PC-9 (cell line): ENCODE measurements at regions of chr10 and their contacts with region 1.

Region 1: GRCh38 chr10:24518981-24519597 is 204.6 kb downstream of the ARHGAP21 start:
- DNase-seq: peak in 1 of 2 experiments; percentile 41
- H3K4me3 ChIP-seq: no peak overlapping the region
- H3K27ac ChIP-seq: no peak overlapping the region
- H3K4me1 ChIP-seq: no peaks in the 10 kb centered on the region
- H3K27me3 ChIP-seq: no peaks in the 10 kb centered on the region
- CTCF ChIP-seq: peak; percentile 82

Region 2: GRCh38 chr10:23525406-23525805 is 993.7 kb before region 1 on chr10:
- CTCF ChIA-PET with region 1: no interaction called
- POLR2A ChIA-PET with region 1: no interaction called
- intact Hi-C with region 1: loop called (anchors 5 kb)
- DNase-seq: peak in 1 of 2 experiments; percentile 19
- H3K4me3 ChIP-seq: no peak overlapping the region
- H3K27ac ChIP-seq: no peak overlapping the region
- H3K4me1 ChIP-seq: peaks cover 10% of the 10 kb centered on the region; the same call in 1 of the 2 replicates
- H3K27me3 ChIP-seq: no peaks in the 10 kb centered on the region
- CTCF ChIP-seq: peak; percentile 60

Region 3: DNA sequence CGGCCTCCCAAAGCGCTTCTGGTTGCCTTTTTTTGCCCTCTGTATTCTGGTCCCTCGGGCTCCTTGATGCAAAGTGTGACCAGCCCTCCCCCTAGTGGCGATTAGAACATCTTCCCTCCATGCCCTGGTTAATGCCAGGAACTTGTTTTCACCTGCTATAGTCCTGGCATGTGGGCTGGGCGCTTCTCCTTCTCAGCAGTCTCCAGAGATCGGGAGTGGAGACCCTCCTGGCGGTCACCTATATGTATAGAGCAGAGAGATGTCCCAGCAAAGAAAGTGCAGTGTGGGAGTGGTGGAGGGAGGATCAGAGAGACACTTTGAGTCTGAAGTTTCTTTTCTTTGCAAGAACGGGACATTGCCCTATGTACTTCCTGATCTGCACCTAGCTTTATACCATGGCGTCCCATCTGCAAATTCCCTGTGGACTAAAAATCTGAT is 816.1 kb before region 1 on chr10:
- CTCF ChIA-PET with region 1: no interaction called
- POLR2A ChIA-PET with region 1: no interaction called
- intact Hi-C with region 1: loop called (anchors 2 kb)
- DNase-seq: peak; percentile 38 to 50
- H3K4me3 ChIP-seq: no peak overlapping the region
- H3K27ac ChIP-seq: no peak overlapping the region
- H3K4me1 ChIP-seq: no peaks in the 10 kb centered on the region
- H3K27me3 ChIP-seq: no peaks in the 10 kb centered on the region; the same call in 1 of the 2 replicates
- CTCF ChIP-seq: peak; percentile 79

Region 4: DNA sequence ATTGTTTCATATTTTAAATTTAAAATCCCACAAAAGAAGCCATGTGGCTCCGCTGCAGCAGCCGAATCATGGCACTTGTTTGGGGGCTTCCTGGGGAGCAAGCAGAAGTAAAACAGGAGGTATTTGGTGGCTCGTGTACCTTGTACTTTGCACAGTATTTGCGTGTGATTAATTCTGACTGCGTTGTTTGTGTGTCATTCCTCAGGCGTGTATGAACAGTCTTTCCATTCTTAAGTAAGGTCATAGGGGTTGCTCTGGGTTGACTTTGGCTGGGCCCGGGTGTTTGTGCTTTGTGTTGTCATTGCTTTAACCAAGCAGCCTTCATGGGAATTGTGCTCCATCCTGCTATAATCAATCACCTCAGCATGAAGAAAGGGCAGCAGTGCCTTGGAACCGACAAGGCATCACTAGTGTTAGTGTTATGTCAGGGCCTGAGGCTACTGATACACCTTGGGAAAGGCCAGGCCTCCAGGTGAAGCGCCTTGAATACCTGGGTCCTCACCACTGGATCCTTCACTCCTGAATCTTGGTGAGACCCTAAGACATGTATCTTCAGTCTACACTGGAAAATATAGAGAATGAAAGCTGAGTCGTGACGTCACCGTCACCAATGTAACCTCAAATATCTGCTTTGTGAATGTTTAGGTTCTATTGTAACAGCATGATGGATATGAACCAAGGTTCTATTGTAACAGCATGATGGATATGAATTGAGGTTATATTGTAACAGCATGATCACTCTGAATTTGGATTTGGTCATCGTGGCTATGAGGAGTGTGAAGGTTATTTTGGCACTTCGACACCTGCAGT is 22.4 kb after region 1 on chr10:
- CTCF ChIA-PET with region 1: interaction called, 11 read pairs
- POLR2A ChIA-PET with region 1: no interaction called
- intact Hi-C with region 1: no loop called
- DNase-seq: no peak
- H3K4me3 ChIP-seq: no peak overlapping the region
- H3K27ac ChIP-seq: no peak overlapping the region
- H3K4me1 ChIP-seq: no peaks in the 10 kb centered on the region
- H3K27me3 ChIP-seq: no peaks in the 10 kb centered on the region
- CTCF ChIP-seq: no peak

Region 5: GRCh38 chr10:24556750-24557742 is 38.0 kb after region 1 on chr10:
- CTCF ChIA-PET with region 1: no interaction called
- POLR2A ChIA-PET with region 1: no interaction called
- intact Hi-C with region 1: no loop called
- DNase-seq: peak in 1 of 2 experiments; percentile 47
- H3K4me3 ChIP-seq: no peak overlapping the region
- H3K27ac ChIP-seq: no peak overlapping the region
- H3K4me1 ChIP-seq: no peaks in the 10 kb centered on the region
- H3K27me3 ChIP-seq: no peaks in the 10 kb centered on the region
- CTCF ChIP-seq: peak; percentile 75

Region 6: GRCh38 chr10:24569828-24570657 is 51.0 kb after region 1 on chr10:
- CTCF ChIA-PET with region 1: no interaction called
- POLR2A ChIA-PET with region 1: no interaction called
- intact Hi-C with region 1: no loop called
- DNase-seq: no peak
- H3K4me3 ChIP-seq: no peak overlapping the region
- H3K27ac ChIP-seq: no peak overlapping the region
- H3K4me1 ChIP-seq: no peaks in the 10 kb centered on the region
- H3K27me3 ChIP-seq: no peaks in the 10 kb centered on the region
- CTCF ChIP-seq: no peak

Region 7: GRCh38 chr10:24589265-24589664 is 70.2 kb after region 1 on chr10:
- CTCF ChIA-PET with region 1: no interaction called
- POLR2A ChIA-PET with region 1: no interaction called
- intact Hi-C with region 1: no loop called
- DNase-seq: no peak
- H3K4me3 ChIP-seq: no peak overlapping the region
- H3K27ac ChIP-seq: no peak overlapping the region
- H3K4me1 ChIP-seq: no peaks in the 10 kb centered on the region
- H3K27me3 ChIP-seq: no peaks in the 10 kb centered on the region
- CTCF ChIP-seq: no peak